ENCODE measurements at regions of chr5 and their contacts with region 1.

Region 1: GRCh38 chr5:168291464-168291961 is at the start of gene WWC1:
- DNase-seq: peak; percentile 63
- ATAC-seq: peak; percentile 80
- H3K4me3 ChIP-seq: peak within 1 kb of the TSS; percentile 80 to 84 (median 82)
- H3K27ac ChIP-seq: peak within 1 kb of the TSS; percentile 29
- H3K4me1 ChIP-seq: peaks cover 78% of the 10 kb centered on the region
- H3K27me3 ChIP-seq: no peaks in the 10 kb centered on the region
- CTCF ChIP-seq: peak; percentile 71
- EP300 ChIP-seq: no peak
- POLR2A ChIP-seq: peak in 1 of 2 experiments; percentile 39; a peak in 1 of 4 replicates
- RAD21 ChIP-seq: 0 out of 2 replicates have a peak, but pooled peaks have one; percentile 48
- total RNA-seq, gene WWC1: 17.3 and 17.9 TPM in 2 replicates

Region 2: DNA sequence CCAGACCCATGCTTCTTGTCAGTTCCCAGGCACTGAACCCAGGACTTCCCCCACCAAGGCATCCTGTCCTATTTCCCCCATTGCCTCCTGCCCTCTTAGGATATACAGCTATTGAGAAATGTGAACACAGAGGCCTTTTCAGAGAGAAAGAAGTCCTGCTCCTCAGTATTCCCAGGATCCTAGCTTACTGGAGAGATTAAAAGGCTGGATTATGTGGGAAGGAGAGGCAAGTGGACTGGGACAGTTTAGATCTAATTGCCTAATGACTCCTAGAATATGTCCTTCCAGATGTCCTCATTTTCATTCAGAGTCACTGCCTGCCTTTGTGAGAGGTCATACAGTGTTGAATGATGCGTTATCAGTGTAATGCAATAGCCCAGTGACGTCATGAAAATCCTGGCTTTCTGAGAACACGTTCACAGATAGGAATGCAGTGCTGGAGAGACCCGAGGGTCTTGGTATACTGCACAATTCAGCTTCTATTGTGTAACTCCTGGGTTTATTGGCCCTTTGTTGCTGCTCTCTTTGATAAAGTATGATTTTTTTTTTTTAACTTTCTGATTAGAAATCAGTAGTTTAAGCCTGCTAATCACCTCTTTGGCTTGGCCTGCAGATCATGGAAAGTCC is 26.1 kb after region 1 on chr5:
- CTCF ChIA-PET with region 1: no interaction called
- POLR2A ChIA-PET with region 1: interaction called, 44 read pairs
- in situ Hi-C with region 1: no loop called
- intact Hi-C with region 1: loop called (anchors 1 kb)
- DNase-seq: peak; percentile 92
- ATAC-seq: no peak
- H3K4me3 ChIP-seq: no peak overlapping the region
- H3K27ac ChIP-seq: peak overlapping the region; percentile 41
- H3K4me1 ChIP-seq: peaks cover 60% of the 10 kb centered on the region
- H3K27me3 ChIP-seq: no peaks in the 10 kb centered on the region
- CTCF ChIP-seq: no peak
- EP300 ChIP-seq: 0 out of 4 replicates have a peak, but pooled peaks of 1 of the 2 experiments have one; percentile 30
- POLR2A ChIP-seq: no peak
- RAD21 ChIP-seq: no peak

Region 3: GRCh38 chr5:168328814-168329213 is 37.3 kb after region 1 on chr5:
- CTCF ChIA-PET with region 1: no interaction called
- POLR2A ChIA-PET with region 1: interaction called, 5 read pairs
- in situ Hi-C with region 1: no loop called
- intact Hi-C with region 1: loop called (anchors 5 kb)
- DNase-seq: peak; percentile 70
- ATAC-seq: peak; percentile 81
- H3K4me3 ChIP-seq: peak overlapping the region; percentile 24 to 53 (median 24); a peak in 4 of 6 replicates
- H3K27ac ChIP-seq: peak overlapping the region; percentile 62
- H3K4me1 ChIP-seq: peaks cover 37% of the 10 kb centered on the region
- H3K27me3 ChIP-seq: no peaks in the 10 kb centered on the region
- CTCF ChIP-seq: no peak
- EP300 ChIP-seq: no peak
- POLR2A ChIP-seq: no peak
- RAD21 ChIP-seq: no peak

Region 4: GRCh38 chr5:168362097-168362885 is 70.8 kb after region 1 on chr5:
- CTCF ChIA-PET with region 1: interaction called, 3 read pairs
- POLR2A ChIA-PET with region 1: interaction called, 9 read pairs
- in situ Hi-C with region 1: no loop called
- intact Hi-C with region 1: loop called (anchors 1 kb)
- DNase-seq: peak; percentile 97
- ATAC-seq: peak; percentile 91
- H3K4me3 ChIP-seq: peak overlapping the region in 1 of 3 experiments; percentile 34; a peak in 1 of 6 replicates
- H3K27ac ChIP-seq: peak overlapping the region; percentile 83
- H3K4me1 ChIP-seq: peaks cover 59% of the 10 kb centered on the region
- H3K27me3 ChIP-seq: no peaks in the 10 kb centered on the region
- CTCF ChIP-seq: 0 out of 2 replicates have a peak, but pooled peaks have one; percentile 10
- EP300 ChIP-seq: peak in 1 of 2 experiments; percentile 80; a peak in 2 of 4 replicates
- POLR2A ChIP-seq: no peak
- RAD21 ChIP-seq: no peak

Region 5: DNA sequence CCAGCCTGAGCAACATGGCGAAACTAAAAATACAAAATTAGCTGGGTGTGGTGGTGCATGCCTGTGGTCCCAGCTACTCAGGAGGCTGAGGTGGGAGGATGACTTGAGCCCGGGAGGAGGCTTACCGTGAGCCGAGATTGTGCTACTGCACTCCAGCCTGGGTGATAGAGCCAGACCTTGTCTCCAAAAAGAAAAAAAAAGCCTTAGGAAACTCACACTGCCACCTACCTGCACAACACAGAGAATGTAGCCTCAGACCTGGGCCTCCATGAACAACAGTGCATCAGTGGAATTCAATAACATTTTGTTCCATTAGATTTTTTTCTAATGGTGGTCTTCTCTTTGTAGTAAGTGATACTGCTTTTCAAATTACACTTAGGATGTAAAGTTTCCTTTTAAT is 130.9 kb after region 1 on chr5:
- CTCF ChIA-PET with region 1: no interaction called
- POLR2A ChIA-PET with region 1: no interaction called
- in situ Hi-C with region 1: no loop called
- intact Hi-C with region 1: loop called (anchors 5 kb)
- DNase-seq: peak; percentile 30
- ATAC-seq: peak; percentile 72
- H3K4me3 ChIP-seq: no peak overlapping the region
- H3K27ac ChIP-seq: no peak overlapping the region
- H3K4me1 ChIP-seq: peaks cover 25% of the 10 kb centered on the region
- H3K27me3 ChIP-seq: no peaks in the 10 kb centered on the region
- CTCF ChIP-seq: peak; percentile 55
- EP300 ChIP-seq: no peak
- POLR2A ChIP-seq: no peak
- RAD21 ChIP-seq: peak; percentile 16; the same call in 1 of the 2 replicates